Endothelial cell of umbilical vein (primary cell): ENCODE measurements at regions of chr12 and their contacts with region 1.

Region 1: DNA sequence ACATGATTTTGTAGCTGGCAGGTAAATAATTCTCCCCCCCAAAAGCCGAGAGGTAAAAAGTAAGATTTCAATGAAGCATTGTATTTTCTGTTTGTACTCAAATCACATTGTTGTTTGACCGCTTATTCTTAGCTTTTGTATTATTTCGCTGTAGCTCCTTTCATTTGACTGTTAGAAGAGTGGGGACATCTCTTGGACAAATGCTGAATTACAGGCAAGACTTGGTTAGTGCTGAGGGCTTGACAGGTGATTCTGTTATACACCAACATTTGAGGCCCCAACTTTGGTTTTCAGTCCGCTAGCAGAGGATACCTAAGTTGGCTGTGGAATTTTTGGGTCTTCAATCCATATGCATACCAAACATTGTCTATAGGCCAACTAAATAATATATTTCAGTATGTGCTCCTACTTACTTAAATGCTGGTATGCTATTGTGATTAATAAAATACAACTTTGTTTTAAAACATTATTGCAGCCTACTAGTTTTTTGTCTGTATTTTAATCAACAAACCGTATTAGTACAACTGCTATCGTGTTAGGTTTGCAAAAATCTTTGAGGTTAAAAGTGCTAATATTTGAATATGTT is 102.2 kb downstream of the ERC1 start:
- DNase-seq: peak; percentile 73
- H3K4me3 ChIP-seq: no peak overlapping the region
- H3K27ac ChIP-seq: no peak overlapping the region
- H3K4me1 ChIP-seq: no peaks in the 10 kb centered on the region
- H3K27me3 ChIP-seq: no peaks in the 10 kb centered on the region
- CTCF ChIP-seq: peak; percentile 53 to 58
- POLR2A ChIP-seq: no peak

Region 2: GRCh38 chr12:810671-811415 is 282.4 kb before region 1 on chr12:
- CTCF ChIA-PET with region 1: interaction called, 27 read pairs
- POLR2A ChIA-PET with region 1: no interaction called
- dilution Hi-C with region 1: no loop called
- intact Hi-C with region 1: loop called (anchors 5 kb)
- DNase-seq: no peak
- H3K4me3 ChIP-seq: no peak overlapping the region
- H3K27ac ChIP-seq: no peak overlapping the region
- H3K4me1 ChIP-seq: peaks cover 13% of the 10 kb centered on the region
- H3K27me3 ChIP-seq: no peaks in the 10 kb centered on the region
- CTCF ChIP-seq: no peak
- POLR2A ChIP-seq: no peak

Region 3: DNA sequence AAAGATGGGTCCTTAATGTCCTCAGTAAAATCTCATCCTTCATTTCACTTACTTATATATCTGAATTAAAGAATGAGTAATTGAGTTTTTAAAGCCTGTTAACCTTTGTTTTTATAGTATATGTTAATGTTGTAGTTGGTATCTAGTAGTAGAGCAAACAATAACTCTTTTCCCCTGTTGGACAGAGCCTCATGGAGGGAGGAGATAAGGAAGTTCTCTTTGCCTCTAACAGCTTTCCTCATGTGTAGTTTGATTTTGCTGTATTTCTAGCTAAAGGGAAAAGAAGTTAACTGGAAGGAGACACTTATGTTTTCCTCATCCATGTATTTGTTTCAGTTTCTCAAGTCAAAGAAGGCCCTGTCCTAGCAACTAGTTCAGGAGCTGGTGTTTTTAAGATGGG is 199.0 kb before region 1 on chr12:
- CTCF ChIA-PET with region 1: interaction called, 12 read pairs
- POLR2A ChIA-PET with region 1: no interaction called
- dilution Hi-C with region 1: no loop called
- intact Hi-C with region 1: loop called (anchors 5 kb)
- DNase-seq: no peak
- H3K4me3 ChIP-seq: no peak overlapping the region
- H3K27ac ChIP-seq: no peak overlapping the region
- H3K4me1 ChIP-seq: no peaks in the 10 kb centered on the region
- H3K27me3 ChIP-seq: no peaks in the 10 kb centered on the region
- CTCF ChIP-seq: no peak
- POLR2A ChIP-seq: no peak

Region 4: GRCh38 chr12:931591-931990 is 161.7 kb before region 1 on chr12:
- CTCF ChIA-PET with region 1: interaction called, 16 read pairs
- POLR2A ChIA-PET with region 1: no interaction called
- dilution Hi-C with region 1: no loop called
- intact Hi-C with region 1: no loop called
- DNase-seq: no peak
- H3K4me3 ChIP-seq: no peak overlapping the region
- H3K27ac ChIP-seq: no peak overlapping the region
- H3K4me1 ChIP-seq: peaks cover 4% of the 10 kb centered on the region
- H3K27me3 ChIP-seq: no peaks in the 10 kb centered on the region
- CTCF ChIP-seq: no peak
- POLR2A ChIP-seq: no peak

Region 5: DNA sequence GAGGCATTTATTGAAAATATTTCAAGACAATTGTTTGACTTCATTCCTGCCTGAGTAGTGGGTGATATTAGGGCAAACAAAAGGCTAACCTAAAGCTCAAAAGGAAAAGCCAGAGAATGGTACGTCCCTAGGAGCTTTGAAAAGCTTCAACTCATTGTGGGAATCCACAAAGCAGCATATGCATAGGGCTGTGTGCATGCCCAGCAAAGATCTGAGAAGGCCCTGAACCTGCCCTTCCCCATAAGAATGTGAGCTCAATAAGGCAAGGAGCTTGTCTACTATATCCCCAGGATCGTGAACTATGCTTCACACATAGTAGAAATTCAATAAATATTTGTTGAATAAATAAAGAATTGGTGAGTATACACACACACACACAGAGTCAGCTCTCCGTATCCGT is 124.7 kb before region 1 on chr12:
- CTCF ChIA-PET with region 1: interaction called, 11 read pairs
- POLR2A ChIA-PET with region 1: no interaction called
- dilution Hi-C with region 1: no loop called
- intact Hi-C with region 1: no loop called
- DNase-seq: no peak
- H3K4me3 ChIP-seq: no peak overlapping the region
- H3K27ac ChIP-seq: no peak overlapping the region
- H3K4me1 ChIP-seq: no peaks in the 10 kb centered on the region
- H3K27me3 ChIP-seq: no peaks in the 10 kb centered on the region
- CTCF ChIP-seq: no peak
- POLR2A ChIP-seq: no peak

Region 6: GRCh38 chr12:1013618-1014489 is 79.4 kb before region 1 on chr12:
- CTCF ChIA-PET with region 1: interaction called, 14 read pairs
- POLR2A ChIA-PET with region 1: no interaction called
- dilution Hi-C with region 1: no loop called
- intact Hi-C with region 1: no loop called
- DNase-seq: peak; percentile 64
- H3K4me3 ChIP-seq: no peak overlapping the region
- H3K27ac ChIP-seq: peak overlapping the region; percentile 57
- H3K4me1 ChIP-seq: peaks cover 11% of the 10 kb centered on the region
- H3K27me3 ChIP-seq: no peaks in the 10 kb centered on the region
- CTCF ChIP-seq: no peak
- POLR2A ChIP-seq: no peak

Region 7: DNA sequence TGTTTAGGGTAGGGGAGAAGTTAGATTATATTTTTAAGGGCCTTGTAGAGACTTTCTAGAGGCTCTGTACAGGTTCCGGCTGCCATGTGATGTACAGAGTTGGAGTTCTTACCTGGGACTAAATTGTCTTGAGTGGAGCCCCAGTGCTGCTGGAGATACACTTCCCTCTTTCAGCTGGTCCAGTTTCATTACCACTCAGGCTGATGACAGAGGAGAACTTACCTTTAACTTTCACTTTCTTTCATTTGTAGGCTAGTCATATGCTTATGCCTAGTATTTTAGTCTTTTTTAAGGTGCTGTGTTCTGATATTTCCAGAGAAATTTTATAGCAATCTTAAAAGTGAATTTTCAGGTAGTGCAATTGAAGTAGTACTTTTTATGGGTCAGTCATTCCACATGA is 15.0 kb after region 1 on chr12:
- CTCF ChIA-PET with region 1: interaction called, 19 read pairs
- POLR2A ChIA-PET with region 1: no interaction called
- dilution Hi-C with region 1: no loop called
- intact Hi-C with region 1: no loop called
- DNase-seq: no peak
- H3K4me3 ChIP-seq: no peak overlapping the region
- H3K27ac ChIP-seq: no peak overlapping the region
- H3K4me1 ChIP-seq: no peaks in the 10 kb centered on the region
- H3K27me3 ChIP-seq: no peaks in the 10 kb centered on the region
- CTCF ChIP-seq: no peak
- POLR2A ChIP-seq: no peak

Region 8: DNA sequence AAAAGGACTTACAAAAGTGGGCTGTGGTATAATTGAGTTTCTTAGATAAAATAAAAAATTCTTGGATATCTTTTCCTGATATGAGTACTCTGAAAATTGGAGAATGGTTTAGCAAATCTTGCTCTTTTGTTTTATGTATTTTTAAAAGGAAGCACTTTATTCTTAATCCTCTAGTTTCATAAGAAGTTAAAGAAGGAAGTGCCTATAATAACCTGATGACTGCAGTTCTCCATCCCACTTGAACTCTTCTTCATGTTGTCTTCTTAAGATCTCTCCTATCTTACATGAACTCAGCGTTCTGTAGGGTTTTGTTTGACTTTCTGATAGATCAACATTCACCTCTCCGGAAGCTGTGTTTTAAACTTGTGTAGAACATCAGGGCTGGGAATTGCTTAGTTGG is 168.8 kb after region 1 on chr12:
- CTCF ChIA-PET with region 1: no interaction called
- POLR2A ChIA-PET with region 1: no interaction called
- dilution Hi-C with region 1: no loop called
- intact Hi-C with region 1: no loop called
- DNase-seq: no peak
- H3K4me3 ChIP-seq: no peak overlapping the region
- H3K27ac ChIP-seq: no peak overlapping the region
- H3K4me1 ChIP-seq: no peaks in the 10 kb centered on the region
- H3K27me3 ChIP-seq: no peaks in the 10 kb centered on the region
- CTCF ChIP-seq: no peak
- POLR2A ChIP-seq: no peak